ENCODE measurements at regions of chr11 and their contacts with region 1.

Region 1: DNA sequence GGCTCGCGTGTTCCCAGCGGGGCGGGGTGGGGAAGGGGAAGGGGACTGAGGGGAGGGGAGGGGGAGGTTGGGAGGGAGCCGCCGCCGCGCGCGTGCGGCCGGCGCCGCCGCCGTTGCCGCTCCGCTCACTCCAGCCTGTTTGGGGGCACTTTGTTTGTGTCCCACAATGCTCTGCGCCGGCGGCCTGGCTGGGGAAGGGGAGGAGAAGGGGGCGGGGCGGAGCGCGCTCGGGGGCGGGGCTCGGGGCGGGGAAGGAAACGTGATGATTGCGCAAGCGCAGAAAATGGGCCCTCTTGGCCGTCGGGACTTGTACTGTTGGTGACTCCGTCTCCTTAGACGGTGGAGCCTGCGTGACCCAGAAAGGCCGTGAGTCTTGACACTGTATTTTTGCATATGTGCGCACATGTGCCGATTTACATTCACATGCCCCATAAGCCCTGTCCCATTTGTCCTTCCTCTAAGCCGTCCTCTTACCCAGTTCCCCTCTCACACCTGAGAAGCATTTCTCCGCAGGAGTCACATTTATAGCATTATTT is at the start of gene ZBTB44:
- DNase-seq: peak; percentile 95
- H3K4me3 Mint-ChIP-seq: peak within 1 kb of the TSS; percentile 96
- H3K27ac Mint-ChIP-seq: peak within 1 kb of the TSS; percentile 98
- H3K4me1 Mint-ChIP-seq: peaks cover 30% of the 10 kb centered on the region
- H3K27me3 Mint-ChIP-seq: peaks cover 1% of the 10 kb centered on the region
- total RNA-seq, gene ZBTB44: 33.1 and 36.0 TPM in 2 replicates

Region 2: DNA sequence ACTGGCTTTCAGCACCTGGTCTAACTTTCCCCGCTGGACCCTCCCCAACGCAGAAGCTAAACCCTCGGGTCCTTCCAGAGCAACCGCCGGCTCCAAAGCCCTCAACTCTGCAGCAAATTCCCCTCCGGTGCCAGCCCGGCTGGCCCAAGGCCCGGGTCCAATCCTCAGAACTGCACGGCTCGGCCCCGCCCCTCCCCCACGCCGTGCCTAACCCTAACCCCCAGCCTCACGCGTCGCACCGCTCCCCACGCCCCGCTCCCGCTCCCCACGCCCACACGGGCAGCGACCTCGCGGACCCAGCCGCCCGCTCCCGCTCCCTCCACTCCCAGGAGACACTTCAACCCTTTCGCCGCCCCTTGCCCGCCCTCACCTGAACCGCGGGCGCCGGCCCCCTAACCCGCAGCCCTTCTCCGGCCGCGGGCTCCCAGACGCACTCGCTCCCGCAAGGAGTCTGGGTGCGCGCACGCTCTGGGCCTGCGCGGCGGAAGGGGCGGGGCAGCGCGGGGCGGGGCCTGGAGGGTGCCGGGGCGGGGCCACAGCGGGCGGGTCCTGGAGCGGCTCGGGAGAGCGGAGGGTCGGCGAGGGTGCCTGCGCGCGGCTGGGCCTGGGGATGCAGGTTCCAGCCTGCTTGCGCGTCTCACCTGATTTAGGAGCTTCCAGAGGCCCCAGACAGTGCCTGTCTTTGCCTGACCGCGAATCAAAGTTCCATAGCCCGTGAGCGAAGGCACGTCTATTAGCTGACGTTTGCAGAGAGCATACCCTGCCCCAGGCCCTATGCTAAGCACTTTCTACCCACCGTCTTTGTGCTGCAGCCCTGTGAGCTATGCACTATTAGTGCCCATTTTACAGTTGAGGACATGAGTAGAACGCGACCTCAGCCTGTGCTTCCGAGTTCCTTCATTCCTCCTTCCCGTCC is 419.4 kb before region 1 on chr11 and contains the start of gene NFRKB:
- intact Hi-C with region 1: loop called (anchors 10 kb)
- DNase-seq: peak; percentile 96
- H3K4me3 Mint-ChIP-seq: peak within 1 kb of the TSS; percentile 91
- H3K27ac Mint-ChIP-seq: peak within 1 kb of the TSS; percentile 89
- H3K4me1 Mint-ChIP-seq: peaks cover 27% of the 10 kb centered on the region
- H3K27me3 Mint-ChIP-seq: peaks cover 6% of the 10 kb centered on the region
- total RNA-seq, gene NFRKB: 45.5 and 52.2 TPM in 2 replicates

Region 3: DNA sequence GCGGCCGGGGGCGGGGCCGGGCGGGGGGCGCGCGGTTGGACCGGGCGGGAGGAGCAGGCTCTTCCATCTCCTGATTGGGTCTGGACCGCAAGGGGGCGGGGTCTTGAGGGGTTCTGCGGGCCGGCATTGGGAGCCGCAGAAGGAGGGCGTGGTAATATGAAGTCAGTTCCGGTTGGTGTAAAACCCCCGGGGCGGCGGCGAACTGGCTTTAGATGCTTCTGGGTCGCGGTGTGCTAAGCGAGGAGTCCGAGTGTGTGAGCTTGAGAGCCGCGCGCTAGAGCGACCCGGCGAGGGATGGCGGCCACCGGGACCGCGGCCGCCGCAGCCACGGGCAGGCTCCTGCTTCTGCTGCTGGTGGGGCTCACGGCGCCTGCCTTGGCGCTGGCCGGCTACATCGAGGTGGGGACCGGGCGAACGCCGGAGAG is 245.1 kb before region 1 on chr11 and contains the start of gene APLP2:
- intact Hi-C with region 1: loop called (anchors 2 kb)
- DNase-seq: peak; percentile 99
- H3K4me3 Mint-ChIP-seq: peak within 1 kb of the TSS; percentile 95
- H3K27ac Mint-ChIP-seq: peak within 1 kb of the TSS; percentile 87
- H3K4me1 Mint-ChIP-seq: peaks cover 20% of the 10 kb centered on the region
- H3K27me3 Mint-ChIP-seq: peaks cover 35% of the 10 kb centered on the region
- total RNA-seq, gene APLP2: 44.9 and 46.4 TPM in 2 replicates

Region 4: DNA sequence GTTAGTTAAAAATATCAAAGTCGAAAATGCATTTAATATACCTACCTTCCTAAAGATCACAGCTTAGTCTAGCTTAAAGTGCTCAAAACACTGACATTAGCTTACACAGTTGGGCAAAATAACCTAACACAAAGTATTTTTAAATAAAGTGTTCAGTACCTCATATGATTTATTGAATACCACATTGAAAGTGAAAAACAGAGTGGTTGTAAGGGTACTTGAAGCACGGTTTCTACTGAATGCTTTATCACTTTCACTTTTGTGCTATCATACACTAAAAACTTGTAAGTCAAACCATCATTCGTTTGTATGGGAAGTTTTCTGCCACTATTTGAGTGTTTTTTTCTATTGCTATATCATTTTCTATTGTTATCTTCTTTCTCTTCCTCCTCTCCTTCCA is 36.7 kb before region 1 on chr11:
- intact Hi-C with region 1: loop called (anchors 2 kb)
- DNase-seq: no peak
- H3K4me3 Mint-ChIP-seq: peak overlapping the region; percentile 3
- H3K27ac Mint-ChIP-seq: peak overlapping the region; percentile 27
- H3K4me1 Mint-ChIP-seq: peaks cover 11% of the 10 kb centered on the region
- H3K27me3 Mint-ChIP-seq: no peaks in the 10 kb centered on the region

Region 5: DNA sequence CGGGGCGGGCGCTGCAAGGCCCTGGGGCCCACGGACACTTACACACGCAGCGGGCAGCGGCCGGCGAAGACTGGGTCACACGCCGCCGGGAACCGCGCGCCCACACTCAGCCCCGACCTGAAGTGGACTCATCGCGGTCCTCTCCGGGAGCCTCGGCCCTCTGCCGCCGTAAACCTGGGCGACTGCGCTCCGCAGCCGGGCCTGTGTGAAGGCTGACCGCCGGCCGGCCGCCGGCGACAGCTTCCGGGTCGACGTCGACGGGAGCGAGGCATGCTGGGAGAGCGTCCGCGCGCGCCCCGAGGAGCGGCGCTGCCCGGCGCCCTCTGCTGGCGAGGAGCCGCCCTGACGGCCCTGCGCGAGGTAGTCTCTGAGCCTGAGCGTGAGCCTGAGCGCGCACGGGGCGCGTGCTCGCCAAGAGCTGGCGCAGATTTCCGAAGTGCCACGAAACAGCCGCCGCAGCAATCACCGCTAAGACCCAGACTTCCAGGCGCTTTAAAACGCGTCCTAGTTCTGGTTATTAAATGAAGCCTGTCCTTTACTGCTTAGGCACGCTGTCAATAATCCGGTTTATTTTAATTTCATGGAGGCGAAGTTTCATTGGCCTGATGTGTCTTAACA is 601.5 kb after region 1 on chr11 and contains the start of gene SNX19:
- intact Hi-C with region 1: loop called (anchors 2 kb)
- DNase-seq: peak; percentile 98
- H3K4me3 Mint-ChIP-seq: peak within 1 kb of the TSS; percentile 84
- H3K27ac Mint-ChIP-seq: peak within 1 kb of the TSS; percentile 78
- H3K4me1 Mint-ChIP-seq: peaks cover 27% of the 10 kb centered on the region
- H3K27me3 Mint-ChIP-seq: peaks cover 9% of the 10 kb centered on the region
- total RNA-seq, gene SNX19: 48.7 and 52.9 TPM in 2 replicates

Measured in activated CD4-positive, alpha-beta T cell treated with anti-CD3 and anti-CD28 coated beads, Interleukin-2, amount 10 ng/mL, durations not matched to agents 24 days and 14 days (primary cell).